Caco-2 (cell line): ENCODE measurements at regions of chr9 and their contacts with region 1.

Region 1: DNA sequence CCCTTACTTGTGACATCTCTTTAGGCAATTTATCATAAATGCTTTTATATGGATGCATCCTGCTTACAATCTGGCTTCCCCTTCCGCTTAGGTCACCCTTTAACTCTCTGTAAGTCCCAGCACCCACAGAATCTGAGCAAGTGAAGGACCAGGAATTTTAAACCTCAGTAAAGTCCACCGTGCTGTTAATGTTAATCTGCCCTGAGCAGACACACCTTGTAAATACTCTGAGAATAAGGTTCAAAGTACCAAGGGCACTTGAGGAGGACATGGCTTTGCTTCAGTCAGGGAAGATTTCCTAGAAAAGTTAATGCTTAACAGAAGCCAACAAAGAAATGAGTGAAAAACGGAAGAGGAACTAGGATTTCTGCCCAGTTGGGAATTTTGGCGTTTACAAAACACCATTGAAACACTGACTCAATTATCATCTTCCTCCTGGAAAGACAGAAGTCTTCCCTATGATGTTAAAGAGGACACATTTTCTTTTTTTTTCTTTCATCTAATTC is 26.4 kb upstream of the TTC39B start:
- DNase-seq: peak; percentile 57 to 62
- H3K4me3 ChIP-seq: no peak overlapping the region
- H3K4me3 Mint-ChIP-seq: peak overlapping the region; percentile 61
- H3K27ac Mint-ChIP-seq: peak overlapping the region; percentile 82
- H3K4me1 ChIP-seq: peaks cover 33% of the 10 kb centered on the region
- H3K4me1 Mint-ChIP-seq: peaks cover 35% of the 10 kb centered on the region
- H3K27me3 ChIP-seq: no peaks in the 10 kb centered on the region
- H3K27me3 Mint-ChIP-seq: no peaks in the 10 kb centered on the region
- CTCF ChIP-seq: no peak

Region 2: DNA sequence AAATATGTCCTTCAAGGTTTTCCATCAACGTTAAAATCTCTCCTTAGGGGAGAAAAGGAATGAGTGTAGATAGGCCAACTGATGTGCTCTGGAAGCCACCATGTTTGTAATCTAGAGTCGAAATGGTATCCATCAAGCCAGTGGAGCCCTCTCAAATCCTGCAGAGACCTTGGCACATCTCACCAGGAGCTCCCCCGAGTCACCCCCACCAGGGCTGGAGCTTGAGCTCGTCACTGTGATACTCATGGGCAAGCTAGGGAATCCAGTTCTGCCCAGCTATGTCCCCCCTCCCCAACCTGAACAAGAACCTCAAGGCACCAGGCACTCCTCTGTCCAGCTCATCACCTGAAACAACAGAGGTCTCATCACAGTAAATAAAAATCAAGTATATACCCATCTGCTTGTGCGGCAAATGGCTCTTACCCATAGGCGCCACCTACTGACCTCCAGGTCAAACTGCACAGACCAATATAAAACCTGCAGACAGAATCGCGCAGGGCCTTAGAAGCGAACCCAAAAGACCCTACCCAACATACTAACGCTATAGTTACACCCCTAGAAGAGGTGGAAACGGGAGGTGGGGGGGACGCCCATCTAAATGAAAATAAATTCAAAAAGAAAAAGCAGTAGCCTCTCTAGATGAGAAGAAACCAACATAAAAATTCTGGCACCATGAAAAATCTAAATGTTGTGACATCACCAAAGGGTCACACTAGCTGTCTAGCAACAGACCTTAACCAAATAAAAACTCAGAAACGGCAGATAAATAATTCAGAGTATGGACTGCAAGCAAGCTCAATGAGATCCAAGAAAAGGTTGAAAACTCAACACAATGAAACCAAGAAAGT is 101.4 kb before region 1 on chr9:
- CTCF ChIA-PET with region 1: no interaction called
- POLR2A ChIA-PET with region 1: no interaction called
- intact Hi-C with region 1: no loop called
- DNase-seq: peak in 1 of 2 experiments; percentile 8
- H3K4me3 ChIP-seq: no peak overlapping the region
- H3K4me3 Mint-ChIP-seq: no peak overlapping the region
- H3K27ac Mint-ChIP-seq: no peak overlapping the region
- H3K4me1 ChIP-seq: no peaks in the 10 kb centered on the region
- H3K4me1 Mint-ChIP-seq: no peaks in the 10 kb centered on the region
- H3K27me3 ChIP-seq: no peaks in the 10 kb centered on the region
- H3K27me3 Mint-ChIP-seq: no peaks in the 10 kb centered on the region
- CTCF ChIP-seq: peak; percentile 29 to 40

Region 3: GRCh38 chr9:15287309-15287708 is 46.1 kb before region 1 on chr9:
- CTCF ChIA-PET with region 1: no interaction called
- POLR2A ChIA-PET with region 1: no interaction called
- intact Hi-C with region 1: loop called (anchors 1 kb)
- DNase-seq: peak in 1 of 2 experiments; percentile 41
- H3K4me3 ChIP-seq: no peak overlapping the region
- H3K4me3 Mint-ChIP-seq: no peak overlapping the region
- H3K27ac Mint-ChIP-seq: no peak overlapping the region
- H3K4me1 ChIP-seq: no peaks in the 10 kb centered on the region; the same call in 1 of the 2 replicates
- H3K4me1 Mint-ChIP-seq: peaks cover 15% of the 10 kb centered on the region
- H3K27me3 ChIP-seq: no peaks in the 10 kb centered on the region
- H3K27me3 Mint-ChIP-seq: no peaks in the 10 kb centered on the region
- CTCF ChIP-seq: no peak

Region 4: DNA sequence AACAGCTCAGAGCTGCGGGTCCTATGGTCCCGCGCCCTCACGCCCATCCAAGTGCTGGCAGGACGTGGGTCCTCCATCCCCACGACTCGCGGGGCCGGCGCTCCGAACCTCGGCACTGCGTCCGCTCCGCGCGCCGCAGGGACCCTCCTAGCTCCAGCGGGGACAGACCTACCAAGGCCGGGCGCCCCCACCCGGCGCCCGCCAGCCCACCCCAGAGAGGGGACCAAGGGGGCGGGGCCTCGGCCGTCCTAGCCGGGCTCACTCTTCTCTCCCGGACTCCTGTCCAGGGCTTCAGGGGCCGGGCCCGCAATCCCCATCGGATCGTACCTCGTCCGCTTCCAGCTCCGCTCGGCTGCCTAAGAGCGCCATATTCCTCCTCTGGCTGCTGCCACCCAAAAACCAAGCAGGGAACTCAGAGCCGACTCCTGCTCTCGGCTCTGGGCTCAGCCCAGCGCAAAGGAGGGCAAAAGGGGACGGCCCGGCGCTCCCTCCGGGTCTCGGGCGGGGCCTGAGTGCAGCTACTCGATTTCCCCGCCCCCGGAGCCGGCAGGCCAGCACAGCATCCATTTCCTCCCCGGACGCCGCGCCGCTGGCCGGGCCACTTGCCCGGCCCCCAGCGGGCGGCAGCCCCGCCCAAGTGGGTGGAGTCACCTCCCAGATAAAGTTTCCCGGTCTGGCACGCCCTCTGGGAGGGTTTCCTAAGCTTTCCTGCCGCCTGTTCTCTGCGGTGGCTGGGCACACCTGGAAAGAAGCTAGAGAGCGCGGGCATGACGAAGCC is 26.5 kb before region 1 on chr9 and contains the start of gene TTC39B:
- CTCF ChIA-PET with region 1: interaction called, 4 read pairs
- POLR2A ChIA-PET with region 1: interaction called, 3 read pairs
- intact Hi-C with region 1: loop called (anchors 1 kb)
- DNase-seq: peak; percentile 88 to 93
- H3K4me3 ChIP-seq: peak within 1 kb of the TSS; percentile 74
- H3K4me3 Mint-ChIP-seq: peak within 1 kb of the TSS; percentile 92
- H3K27ac Mint-ChIP-seq: peak within 1 kb of the TSS; percentile 79
- H3K4me1 ChIP-seq: peaks cover 4% of the 10 kb centered on the region; the same call in 1 of the 2 replicates
- H3K4me1 Mint-ChIP-seq: peaks cover 7% of the 10 kb centered on the region
- H3K27me3 ChIP-seq: no peaks in the 10 kb centered on the region
- H3K27me3 Mint-ChIP-seq: no peaks in the 10 kb centered on the region
- CTCF ChIP-seq: no peak
- total RNA-seq, gene TTC39B: 6.9 and 7.6 TPM in 2 replicates

Region 5: DNA sequence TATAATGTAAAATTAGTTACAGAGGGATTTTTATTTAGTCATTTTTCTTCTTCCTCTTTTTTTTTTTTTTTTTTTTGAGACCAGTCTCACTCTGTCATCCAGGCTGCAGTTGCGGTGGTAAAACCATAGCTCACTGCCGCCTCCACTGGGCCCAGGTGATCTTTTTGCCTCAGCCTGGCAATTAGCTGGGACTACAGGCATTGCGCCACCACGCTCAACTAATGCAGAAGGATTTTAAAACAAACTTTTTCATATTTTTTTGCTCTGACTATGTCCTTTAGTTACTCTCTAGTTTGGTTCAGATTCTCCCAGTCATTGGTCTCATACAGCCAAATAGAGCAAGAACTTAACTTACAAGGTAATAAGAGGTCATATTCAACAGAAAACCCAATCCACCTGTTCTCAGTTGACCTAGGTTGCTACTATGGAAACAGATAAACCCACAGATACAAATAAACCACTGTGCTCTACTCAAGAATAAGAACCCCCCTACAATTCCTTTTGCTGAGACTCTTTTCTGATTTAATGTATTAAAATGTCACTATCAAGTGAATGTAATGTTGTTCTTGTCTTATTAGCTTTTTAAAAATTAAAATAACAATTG is 23.7 kb after region 1 on chr9:
- CTCF ChIA-PET with region 1: no interaction called
- POLR2A ChIA-PET with region 1: no interaction called
- intact Hi-C with region 1: no loop called
- DNase-seq: peak in 1 of 2 experiments; percentile 29
- H3K4me3 ChIP-seq: no peak overlapping the region
- H3K4me3 Mint-ChIP-seq: no peak overlapping the region
- H3K27ac Mint-ChIP-seq: no peak overlapping the region
- H3K4me1 ChIP-seq: peaks cover 5% of the 10 kb centered on the region; the same call in 1 of the 2 replicates
- H3K4me1 Mint-ChIP-seq: peaks cover 18% of the 10 kb centered on the region
- H3K27me3 ChIP-seq: no peaks in the 10 kb centered on the region
- H3K27me3 Mint-ChIP-seq: no peaks in the 10 kb centered on the region
- CTCF ChIP-seq: no peak

Region 6: DNA sequence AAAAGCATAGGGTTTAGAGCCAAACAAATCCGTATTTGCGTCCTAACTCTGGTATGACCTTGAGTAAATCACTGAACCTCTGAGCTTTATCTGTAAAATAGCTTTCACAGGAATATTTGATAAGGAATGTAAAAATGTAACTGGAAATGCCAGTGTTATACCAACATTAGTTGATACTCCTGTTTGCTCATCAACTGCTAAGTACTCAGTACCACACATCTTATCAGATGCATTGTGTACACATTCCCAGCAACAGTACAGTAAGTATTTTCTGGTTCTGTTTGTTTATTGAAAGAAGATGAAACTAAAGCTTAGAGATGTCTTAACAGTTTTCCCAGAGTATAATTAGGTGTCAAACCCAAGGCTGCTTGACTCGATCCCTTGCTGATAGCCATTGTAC is 110.7 kb after region 1 on chr9:
- CTCF ChIA-PET with region 1: no interaction called
- POLR2A ChIA-PET with region 1: no interaction called
- intact Hi-C with region 1: no loop called
- DNase-seq: peak in 1 of 2 experiments; percentile 2
- H3K4me3 ChIP-seq: no peak overlapping the region
- H3K4me3 Mint-ChIP-seq: no peak overlapping the region
- H3K27ac Mint-ChIP-seq: no peak overlapping the region
- H3K4me1 ChIP-seq: peaks cover 6% of the 10 kb centered on the region
- H3K4me1 Mint-ChIP-seq: no peaks in the 10 kb centered on the region
- H3K27me3 ChIP-seq: no peaks in the 10 kb centered on the region
- H3K27me3 Mint-ChIP-seq: no peaks in the 10 kb centered on the region
- CTCF ChIP-seq: no peak